Ovary (tissue), 10 donors: ENCODE measurements at regions of chr1 and their contacts with region 1.

Region 1: DNA sequence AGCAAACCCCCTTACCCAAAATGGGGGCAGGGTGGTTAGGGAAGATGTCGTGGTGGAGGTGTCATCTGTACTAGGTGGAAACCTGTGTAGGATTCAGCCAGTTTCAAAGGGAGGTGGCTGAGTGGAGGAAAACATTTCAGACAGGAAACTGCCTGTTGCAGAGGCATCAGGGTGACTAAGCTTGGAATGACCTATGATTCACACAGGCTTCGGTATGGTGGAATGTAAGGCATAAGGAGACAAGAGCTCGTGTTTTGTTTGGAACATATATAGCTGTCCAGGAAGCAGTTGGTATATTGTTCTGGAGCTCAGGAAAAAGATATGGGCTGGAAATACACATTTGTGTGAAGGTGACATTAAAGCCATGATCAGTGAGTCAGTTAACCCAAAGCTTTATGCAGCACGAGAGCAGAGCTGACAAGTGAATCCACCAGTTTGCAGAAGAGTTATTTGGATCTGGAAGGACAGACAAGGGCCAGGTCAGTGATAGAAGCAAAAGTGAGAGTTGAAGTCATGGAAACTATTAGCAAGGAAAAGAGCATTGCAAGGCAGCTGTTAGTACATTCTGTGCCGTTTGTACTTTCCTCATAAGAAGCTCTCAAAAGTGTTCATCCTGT is 12.2 kb downstream of the UTP25 start:
- DNase-seq: no peak
- H3K4me3 ChIP-seq: no peak overlapping the region
- H3K27ac ChIP-seq: no peak overlapping the region
- H3K4me1 ChIP-seq: no peaks in the 10 kb centered on the region
- H3K27me3 ChIP-seq: no peaks in the 10 kb centered on the region
- CTCF ChIP-seq: no peak
- EP300 ChIP-seq: no peak
- POLR2A ChIP-seq: no peak

Region 2: GRCh38 chr1:209881619-209882018 is 41.6 kb after region 1 on chr1:
- intact Hi-C with region 1: loop called in 1 of 4 experiments (anchors 1 kb)
- DNase-seq: no peak
- H3K4me3 ChIP-seq: no peak overlapping the region
- H3K27ac ChIP-seq: no peak overlapping the region
- H3K4me1 ChIP-seq: peaks cover 1% of the 10 kb centered on the region
- H3K27me3 ChIP-seq: no peaks in the 10 kb centered on the region
- CTCF ChIP-seq: no peak
- EP300 ChIP-seq: no peak
- POLR2A ChIP-seq: no peak